ENCODE measurements at regions of chr5 and their contacts with region 1.

Region 1: GRCh38 chr5:61331407-61332357 is at the start of gene ZSWIM6:
- DNase-seq: peak; percentile 97
- ATAC-seq: peak; percentile 78
- H3K4me3 Mint-ChIP-seq: peak within 1 kb of the TSS; percentile 93
- H3K27ac Mint-ChIP-seq: peak within 1 kb of the TSS; percentile 93
- H3K4me1 Mint-ChIP-seq: peaks cover 48% of the 10 kb centered on the region
- H3K27me3 Mint-ChIP-seq: peaks cover 5% of the 10 kb centered on the region
- CTCF ChIP-seq: no peak
- total RNA-seq, gene ZSWIM6: 6.9 and 8.5 TPM in 2 replicates

Region 2: DNA sequence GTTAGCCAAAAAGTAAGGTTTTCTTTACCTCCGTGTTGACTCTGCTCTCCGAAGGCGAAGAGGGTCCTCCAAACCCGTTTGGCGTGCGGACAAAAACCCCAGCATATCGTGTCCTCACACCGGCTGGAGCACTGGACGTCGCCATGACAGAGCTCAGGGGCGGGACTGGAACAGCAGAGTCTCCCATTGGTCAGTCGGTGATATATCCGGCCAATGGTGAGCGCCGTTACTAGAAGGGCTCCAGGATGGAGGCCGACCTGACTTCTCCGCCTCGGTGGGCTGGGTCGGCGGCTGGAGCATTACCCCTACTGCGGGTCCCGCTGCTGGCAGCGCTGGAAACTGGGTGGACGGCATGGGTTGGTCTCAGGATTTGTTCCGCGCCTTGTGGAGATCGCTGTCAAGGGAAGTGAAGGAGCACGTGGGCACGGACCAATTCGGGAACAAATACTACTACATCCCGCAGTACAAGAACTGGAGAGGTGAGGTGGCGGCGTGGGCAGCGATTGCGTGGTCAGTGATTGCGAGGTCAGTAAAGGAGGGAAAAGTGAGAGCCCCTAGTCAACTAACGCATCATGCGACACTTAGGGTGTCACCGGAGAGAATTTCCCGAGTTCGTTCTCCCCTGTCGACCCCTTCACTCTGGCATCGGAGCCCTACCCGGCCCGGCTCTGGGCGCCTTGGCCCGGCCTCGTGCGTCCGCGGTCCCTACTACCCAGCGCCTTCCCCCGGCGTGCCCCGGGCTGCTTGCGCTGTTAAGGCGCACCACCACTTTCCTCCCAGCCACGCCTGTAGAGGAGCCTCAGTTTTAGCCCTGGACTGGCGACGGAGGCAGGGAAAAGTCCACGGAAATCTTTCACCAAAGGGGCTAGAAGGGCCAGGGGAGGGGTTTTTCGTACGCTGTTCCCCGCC is 386.5 kb before region 1 on chr5 and contains the starts of genes ERCC8 and NDUFAF2:
- CTCF ChIA-PET with region 1: no interaction called
- POLR2A ChIA-PET with region 1: interaction called, 23 read pairs
- intact Hi-C with region 1: loop called (anchors 1 kb)
- DNase-seq: peak; percentile 75
- ATAC-seq: peak; percentile 98
- H3K4me3 Mint-ChIP-seq: no peak within 1 kb of the TSS
- H3K27ac Mint-ChIP-seq: no peak within 1 kb of the TSS
- H3K4me1 Mint-ChIP-seq: peaks cover 28% of the 10 kb centered on the region
- H3K27me3 Mint-ChIP-seq: no peaks in the 10 kb centered on the region
- CTCF ChIP-seq: no peak
- total RNA-seq, gene ERCC8: 10.7 and 11.2 TPM in 2 replicates
- total RNA-seq, gene NDUFAF2: 13.1 and 20.0 TPM in 2 replicates

Region 3: GRCh38 chr5:61115968-61116367 is 215.7 kb before region 1 on chr5:
- CTCF ChIA-PET with region 1: no interaction called
- POLR2A ChIA-PET with region 1: no interaction called
- intact Hi-C with region 1: no loop called
- DNase-seq: no peak
- ATAC-seq: no peak
- H3K4me3 Mint-ChIP-seq: no peak overlapping the region
- H3K27ac Mint-ChIP-seq: no peak overlapping the region
- H3K4me1 Mint-ChIP-seq: no peaks in the 10 kb centered on the region
- H3K27me3 Mint-ChIP-seq: no peaks in the 10 kb centered on the region
- CTCF ChIP-seq: no peak

Region 4: GRCh38 chr5:61280205-61280604 is 51.5 kb before region 1 on chr5:
- CTCF ChIA-PET with region 1: no interaction called
- POLR2A ChIA-PET with region 1: interaction called, 5 read pairs
- intact Hi-C with region 1: loop called (anchors 2 kb)
- DNase-seq: no peak
- ATAC-seq: peak; percentile 77
- H3K4me3 Mint-ChIP-seq: no peak overlapping the region
- H3K27ac Mint-ChIP-seq: no peak overlapping the region
- H3K4me1 Mint-ChIP-seq: peaks cover 37% of the 10 kb centered on the region
- H3K27me3 Mint-ChIP-seq: no peaks in the 10 kb centered on the region
- CTCF ChIP-seq: no peak

Region 5: GRCh38 chr5:61348447-61348846 is 16.8 kb after region 1 on chr5:
- CTCF ChIA-PET with region 1: no interaction called
- POLR2A ChIA-PET with region 1: interaction called, 5 read pairs
- intact Hi-C with region 1: loop called (anchors 2 kb)
- DNase-seq: no peak
- ATAC-seq: no peak
- H3K4me3 Mint-ChIP-seq: no peak overlapping the region
- H3K27ac Mint-ChIP-seq: no peak overlapping the region
- H3K4me1 Mint-ChIP-seq: peaks cover 69% of the 10 kb centered on the region
- H3K27me3 Mint-ChIP-seq: no peaks in the 10 kb centered on the region
- CTCF ChIP-seq: no peak

Region 6: GRCh38 chr5:61625681-61626621 is 294.3 kb after region 1 on chr5:
- CTCF ChIA-PET with region 1: no interaction called
- POLR2A ChIA-PET with region 1: no interaction called
- intact Hi-C with region 1: loop called (anchors 10 kb)
- DNase-seq: peak; percentile 34
- ATAC-seq: peak; percentile 66
- H3K4me3 Mint-ChIP-seq: peak overlapping the region; percentile 72
- H3K27ac Mint-ChIP-seq: no peak overlapping the region
- H3K4me1 Mint-ChIP-seq: peaks cover 16% of the 10 kb centered on the region
- H3K27me3 Mint-ChIP-seq: peaks cover 21% of the 10 kb centered on the region
- CTCF ChIP-seq: no peak

Region 7: DNA sequence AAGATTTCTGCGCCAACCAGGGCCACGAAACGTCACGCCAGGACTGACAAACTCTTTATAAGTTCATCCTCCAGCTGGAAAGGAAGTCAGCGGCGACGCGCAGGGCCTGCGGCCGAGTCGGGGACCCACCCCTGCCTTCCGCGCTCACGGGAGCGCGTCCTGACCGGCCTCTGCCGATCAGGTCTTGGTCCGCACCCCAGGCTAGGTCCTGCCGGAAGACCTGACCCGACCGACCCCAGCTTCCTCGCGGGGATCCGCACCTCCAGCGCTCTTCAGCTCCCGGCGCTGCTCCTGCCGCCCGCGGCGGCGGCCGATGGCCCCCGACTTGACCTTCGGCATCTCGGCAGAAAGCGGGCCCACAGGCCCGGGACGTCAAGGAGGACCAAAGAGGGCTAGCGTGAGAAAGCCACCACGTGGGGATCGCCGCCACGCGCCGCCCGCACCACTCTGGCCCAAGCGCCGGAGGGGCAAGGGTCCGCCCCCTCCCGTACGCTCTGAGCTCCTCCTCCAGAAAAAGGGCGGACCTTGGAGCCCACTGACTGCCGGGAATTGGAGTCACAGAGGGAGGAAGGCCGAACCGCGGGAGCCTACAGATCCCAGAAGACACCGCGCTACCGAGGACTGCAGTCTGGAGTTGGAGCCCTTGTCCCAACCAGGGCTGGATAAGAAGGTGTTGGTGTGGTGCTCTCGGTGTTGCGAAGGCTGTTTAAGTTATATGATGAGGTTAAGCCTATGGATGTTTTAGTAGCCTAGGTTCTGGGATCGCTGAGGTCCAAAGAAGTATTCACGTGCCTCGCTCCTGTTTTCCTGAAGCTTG is 1072.0 kb after region 1 on chr5 and contains the start of gene DIMT1:
- CTCF ChIA-PET with region 1: no interaction called
- POLR2A ChIA-PET with region 1: interaction called, 3 read pairs
- intact Hi-C with region 1: loop called (anchors 2 kb)
- DNase-seq: peak; percentile 86
- ATAC-seq: peak; percentile 97
- H3K4me3 Mint-ChIP-seq: peak within 1 kb of the TSS; percentile 94
- H3K27ac Mint-ChIP-seq: peak within 1 kb of the TSS; percentile 89
- H3K4me1 Mint-ChIP-seq: peaks cover 23% of the 10 kb centered on the region
- H3K27me3 Mint-ChIP-seq: no peaks in the 10 kb centered on the region
- CTCF ChIP-seq: no peak
- total RNA-seq, gene DIMT1: 28.2 and 28.7 TPM in 2 replicates